ENCODE measurements at regions of chr9 and their contacts with region 1.

Region 1: DNA sequence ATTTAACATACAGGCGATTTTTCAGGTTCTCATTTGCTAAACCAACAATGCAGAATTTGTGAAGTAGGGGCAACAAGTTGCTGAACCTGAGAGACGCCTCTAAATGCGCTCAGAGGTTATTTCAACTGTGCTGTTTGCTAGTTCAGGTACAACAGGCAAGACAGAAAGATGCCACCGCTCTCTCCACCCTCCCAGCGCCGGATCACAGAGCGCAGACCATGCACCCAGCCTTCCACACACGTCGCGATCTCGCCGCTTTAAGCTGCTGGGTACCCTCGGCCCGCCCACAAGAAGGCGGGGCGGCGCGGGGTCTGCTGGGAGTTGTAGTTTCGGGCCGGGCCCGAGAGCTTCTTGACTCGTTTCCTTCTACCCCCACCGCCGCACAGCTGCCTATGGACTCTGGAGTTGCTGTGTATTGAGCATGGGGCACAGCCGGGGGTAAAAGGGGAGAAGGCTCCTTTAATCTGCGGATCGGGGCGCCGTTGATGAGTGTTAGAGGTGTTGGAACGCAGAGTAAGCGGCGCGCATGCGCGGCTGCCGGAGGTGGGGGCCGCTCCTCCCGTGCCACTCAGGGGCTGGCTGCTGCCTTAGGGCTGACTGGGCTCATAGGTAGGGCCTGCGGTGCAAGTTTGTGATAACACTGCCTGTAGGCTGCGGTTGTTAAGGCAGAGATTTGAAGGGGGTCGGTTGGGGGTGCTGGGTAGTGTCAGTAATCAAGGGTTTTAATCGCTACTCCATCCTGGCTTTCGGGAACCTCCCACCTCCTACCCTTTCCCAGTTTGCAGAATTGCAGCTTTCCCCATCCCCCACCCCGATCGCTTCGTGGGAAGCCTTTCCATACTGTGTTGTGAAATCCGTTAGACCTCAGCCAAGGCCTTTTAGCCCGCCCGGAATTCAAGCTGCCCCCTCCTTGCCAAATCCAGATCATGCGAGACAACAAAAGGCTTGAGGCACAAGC is 40.3 kb upstream of the ABCA1 start:
- DNase-seq: peak; percentile 89 to 97 (median 95)
- H3K4me3 ChIP-seq: peak overlapping the region; percentile 49 to 90 (median 64)
- H3K27ac ChIP-seq: peak overlapping the region; percentile 88 to 97 (median 96)
- H3K4me1 ChIP-seq: peaks cover 12 to 14% of the 10 kb centered on the region in 2 donors
- H3K27me3 ChIP-seq: no peaks in the 10 kb centered on the region
- CTCF ChIP-seq: no peak
- POLR2A ChIP-seq: peak; percentile 57 to 72

Region 2: GRCh38 chr9:104934691-104935500 is 33.4 kb before region 1 on chr9:
- intact Hi-C with region 1: loop called in 1 of 2 experiments (anchors 5 kb)
- DNase-seq: no peak
- H3K4me3 ChIP-seq: no peak overlapping the region
- H3K27ac ChIP-seq: peak overlapping the region in 1 of 5 donors; percentile 16
- H3K4me1 ChIP-seq: peaks cover 9 to 24% of the 10 kb centered on the region in 2 donors
- H3K27me3 ChIP-seq: no peaks in the 10 kb centered on the region
- CTCF ChIP-seq: no peak
- POLR2A ChIP-seq: no peak

Region 3: GRCh38 chr9:105178076-105178475 is 209.8 kb after region 1 on chr9:
- intact Hi-C with region 1: no loop called
- DNase-seq: no peak
- H3K4me3 ChIP-seq: no peak overlapping the region
- H3K27ac ChIP-seq: no peak overlapping the region
- H3K4me1 ChIP-seq: peaks cover 0 to 6% of the 10 kb centered on the region in 2 donors
- H3K27me3 ChIP-seq: no peaks in the 10 kb centered on the region
- CTCF ChIP-seq: no peak
- POLR2A ChIP-seq: no peak